Prostate gland (tissue), 2 donors: ENCODE measurements at regions of chr2 and their contacts with region 1.

Region 1: GRCh38 chr2:85243101-85244072 is 84.4 kb downstream of the TGOLN2 start:
- DNase-seq: no peak
- H3K4me3 ChIP-seq: no peak overlapping the region
- H3K27ac ChIP-seq: no peak overlapping the region
- H3K4me1 ChIP-seq: no peaks in the 10 kb centered on the region
- H3K27me3 ChIP-seq: no peaks in the 10 kb centered on the region
- CTCF ChIP-seq: peak in 3 of 4 experiments; percentile 31 to 39 (median 38)
- POLR2A ChIP-seq: no peak

Region 2: GRCh38 chr2:85132834-85133637 is 110.4 kb before region 1 on chr2 and contains the start of gene TCF7L1:
- intact Hi-C with region 1: loop called (anchors 1 kb)
- DNase-seq: peak; percentile 82
- H3K4me3 ChIP-seq: peak within 1 kb of the TSS; percentile 50 to 57
- H3K27ac ChIP-seq: peak within 1 kb of the TSS; percentile 74 to 75
- H3K4me1 ChIP-seq: no peaks in the 10 kb centered on the region
- H3K27me3 ChIP-seq: no peaks in the 10 kb centered on the region
- CTCF ChIP-seq: peak; percentile 79 to 89 (median 87)
- POLR2A ChIP-seq: peak; percentile 41
- total RNA-seq, gene TCF7L1: 2.6 to 7.0 TPM